OCI-LY7 (cell line): ENCODE measurements at regions of chr11 and their contacts with region 1.

Region 1: GRCh38 chr11:47373876-47374720 is 4.2 kb downstream of the SPI1 start:
- DNase-seq: peak; percentile 81
- H3K4me3 ChIP-seq: no peak overlapping the region
- H3K27ac ChIP-seq: peak overlapping the region; percentile 45
- H3K4me1 ChIP-seq: peaks cover 43% of the 10 kb centered on the region
- CTCF ChIP-seq: peak; percentile 98

Region 2: GRCh38 chr11:47393150-47394049 is 19.3 kb after region 1 on chr11:
- CTCF ChIA-PET with region 1: interaction called, 4 read pairs
- POLR2A ChIA-PET with region 1: interaction called, 19 read pairs
- intact Hi-C with region 1: no loop called
- DNase-seq: no peak
- H3K4me3 ChIP-seq: peak overlapping the region; percentile 12
- H3K27ac ChIP-seq: peak overlapping the region; percentile 82
- H3K4me1 ChIP-seq: peaks cover 57% of the 10 kb centered on the region
- CTCF ChIP-seq: no peak

Region 3: DNA sequence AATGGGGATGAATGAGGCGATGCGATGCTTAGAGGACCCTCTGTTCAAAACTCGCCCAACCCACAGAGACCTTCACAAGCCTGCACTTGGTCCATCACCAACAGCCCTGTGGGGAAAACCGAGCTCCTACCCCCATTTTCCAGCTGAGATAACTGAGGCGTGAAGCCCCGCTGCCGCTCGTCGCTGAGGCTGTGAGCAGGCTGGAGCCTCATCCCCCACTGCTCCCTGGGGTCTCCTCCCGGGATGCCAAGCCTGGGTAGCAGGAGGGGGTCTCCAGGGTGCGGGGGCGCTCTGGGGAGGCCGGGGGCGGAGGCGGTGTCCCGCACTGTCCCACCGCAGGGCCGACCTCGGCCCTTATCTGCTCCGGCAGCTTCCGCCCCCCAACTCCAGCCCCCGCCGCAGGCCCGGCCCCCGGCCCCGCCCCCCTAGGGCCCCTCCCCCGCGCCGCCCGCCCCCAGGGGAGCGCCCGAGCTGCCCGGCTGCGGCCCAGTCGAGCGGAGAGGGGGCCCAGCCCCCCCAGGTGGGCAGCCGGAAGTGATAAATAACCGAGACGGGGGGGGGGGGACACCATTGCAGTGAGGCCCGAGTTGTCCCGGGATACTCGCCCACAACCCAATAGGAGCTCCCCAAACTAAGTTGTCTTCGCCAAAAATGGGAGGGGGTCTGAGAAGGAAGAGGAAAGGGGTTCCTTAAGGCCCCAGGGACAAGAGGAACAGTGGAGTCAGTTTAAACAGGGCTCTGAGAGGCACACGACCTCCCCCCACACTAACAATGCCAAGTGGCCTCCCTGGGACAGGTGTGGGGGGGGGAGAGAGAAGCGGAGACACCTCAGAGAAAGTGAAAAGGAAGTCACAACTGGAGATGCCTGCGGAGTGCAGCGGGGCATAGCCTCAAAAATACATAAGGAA is 26.0 kb after region 1 on chr11:
- CTCF ChIA-PET with region 1: interaction called, 6 read pairs
- POLR2A ChIA-PET with region 1: interaction called, 20 read pairs
- intact Hi-C with region 1: loop called (anchors 1 kb)
- DNase-seq: peak; percentile 92
- H3K4me3 ChIP-seq: peak overlapping the region; percentile 78
- H3K27ac ChIP-seq: peak overlapping the region; percentile 96
- H3K4me1 ChIP-seq: peaks cover 81% of the 10 kb centered on the region
- CTCF ChIP-seq: no peak

Region 4: DNA sequence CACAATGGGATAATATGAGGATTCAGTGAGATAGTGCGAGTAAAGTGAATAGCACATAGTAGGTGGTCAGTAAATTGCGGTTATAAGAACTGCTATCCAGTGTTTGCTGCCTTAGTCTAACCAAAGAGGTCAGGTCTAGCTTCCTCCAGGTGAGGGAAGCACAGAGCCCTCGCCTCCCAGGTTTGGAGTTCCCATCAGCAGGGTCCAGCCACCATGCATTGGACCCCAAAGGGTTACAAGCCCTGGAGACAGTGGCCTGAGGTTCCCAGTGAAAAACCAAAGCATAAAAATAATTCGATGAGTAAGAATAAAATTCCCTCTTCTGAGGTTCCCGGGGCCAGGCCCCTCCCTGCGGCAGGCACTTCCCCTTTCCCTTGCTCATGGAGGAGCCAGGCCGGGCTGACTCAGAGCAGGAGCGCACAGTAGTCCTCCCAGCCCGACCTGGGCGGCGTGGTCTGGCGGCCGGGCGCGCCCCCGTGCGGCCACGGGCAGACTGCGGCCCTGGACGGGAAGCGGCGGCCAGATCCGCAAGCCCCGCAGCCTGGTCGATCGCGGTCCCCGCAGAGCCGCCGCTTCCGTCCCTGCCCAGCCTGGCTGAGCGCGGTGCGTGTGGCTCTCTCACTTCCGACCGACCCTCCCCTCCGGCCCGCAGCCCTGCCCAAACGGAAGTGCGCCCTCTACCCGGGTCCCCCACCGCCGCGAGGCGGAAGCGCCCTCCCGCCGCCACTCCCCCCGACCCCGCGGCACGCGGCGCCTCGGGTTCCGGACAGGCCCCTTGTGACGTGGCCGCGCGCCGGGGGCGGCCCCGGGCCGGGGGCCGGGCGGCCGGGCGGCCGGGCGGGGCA is 33.9 kb after region 1 on chr11 and contains the start of gene SLC39A13:
- CTCF ChIA-PET with region 1: interaction called, 9 read pairs
- POLR2A ChIA-PET with region 1: interaction called, 9 read pairs
- intact Hi-C with region 1: loop called (anchors 1 kb)
- DNase-seq: peak; percentile 96
- H3K4me3 ChIP-seq: peak within 1 kb of the TSS; percentile 88
- H3K27ac ChIP-seq: peak within 1 kb of the TSS; percentile 80
- H3K4me1 ChIP-seq: peaks cover 54% of the 10 kb centered on the region
- CTCF ChIP-seq: peak; percentile 91
- total RNA-seq, gene SLC39A13: 31.6 and 31.8 TPM in 2 replicates

Region 5: DNA sequence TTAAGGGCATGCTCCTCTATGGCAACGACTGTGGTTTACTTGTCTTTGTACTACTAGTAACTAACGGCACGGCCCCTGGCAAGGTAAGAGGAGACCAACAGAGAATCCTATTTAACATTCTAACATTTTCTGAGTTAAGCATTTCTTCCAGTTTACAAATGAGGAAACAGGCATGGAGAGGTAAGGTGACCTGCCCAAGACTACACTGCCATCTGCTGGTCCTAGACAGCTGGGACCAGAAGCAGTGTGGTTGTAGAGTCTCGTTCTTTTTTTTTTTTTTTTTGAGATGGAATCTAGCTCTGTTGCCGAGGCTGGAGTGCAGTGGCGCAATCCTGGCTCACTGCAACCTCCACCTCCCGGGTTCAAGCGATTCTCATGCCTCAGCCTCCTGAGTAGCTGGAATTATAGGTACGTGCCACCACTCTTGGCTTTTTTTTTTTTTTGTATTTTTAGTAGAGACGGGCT is 80.1 kb after region 1 on chr11:
- CTCF ChIA-PET with region 1: no interaction called
- POLR2A ChIA-PET with region 1: no interaction called
- intact Hi-C with region 1: loop called (anchors 10 kb)
- DNase-seq: peak; percentile 88
- H3K4me3 ChIP-seq: no peak overlapping the region
- H3K27ac ChIP-seq: no peak overlapping the region
- H3K4me1 ChIP-seq: no peaks in the 10 kb centered on the region
- CTCF ChIP-seq: peak; percentile 87